CD14-positive monocyte (primary cell): ENCODE measurements at regions of chr11 and their contacts with region 1.

Region 1: DNA sequence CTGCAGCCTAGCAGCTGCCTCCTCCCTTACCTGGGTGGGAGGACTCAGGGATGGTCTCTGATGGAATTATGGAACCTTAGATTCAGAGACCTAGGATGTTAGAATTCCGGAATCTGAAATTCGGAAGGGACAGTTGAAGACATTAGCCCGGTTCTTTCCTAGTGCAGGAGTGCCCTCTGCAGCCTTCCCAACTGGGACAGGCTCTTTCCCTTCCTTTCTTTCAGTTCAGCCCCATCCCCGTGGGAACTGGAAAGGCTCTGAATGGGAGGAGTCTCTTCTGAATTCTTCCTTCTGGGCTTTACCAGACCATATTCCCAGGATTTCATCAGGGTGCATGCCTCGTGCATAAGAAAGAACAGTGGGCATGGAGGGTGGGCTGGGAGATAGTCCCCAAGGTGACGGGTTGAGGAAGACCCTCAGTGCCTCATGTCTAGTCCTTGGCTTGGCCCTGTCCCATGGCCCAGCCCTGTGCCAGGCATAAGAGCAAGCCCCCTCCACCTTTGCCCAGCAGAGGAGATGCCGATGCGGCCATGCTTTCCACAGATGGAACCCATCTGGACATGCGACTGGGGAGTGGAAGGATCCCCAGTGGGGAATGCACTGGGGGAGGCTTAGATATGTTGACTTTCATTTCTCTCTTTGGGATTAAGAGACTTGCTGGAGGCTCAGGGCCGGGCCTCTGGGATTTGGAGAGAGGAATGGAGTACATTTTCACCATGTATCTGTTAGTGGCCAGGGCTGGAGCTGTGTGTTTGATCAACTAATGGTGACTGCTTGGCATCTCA is 14.4 kb downstream of the DNAJB13 start:
- DNase-seq: no peak
- H3K4me3 ChIP-seq: no peak overlapping the region
- H3K4me3 Mint-ChIP-seq: no peak overlapping the region
- H3K27ac ChIP-seq: no peak overlapping the region
- H3K27ac Mint-ChIP-seq: no peak overlapping the region
- H3K4me1 ChIP-seq: peaks cover 3 to 5% of the 10 kb centered on the region in 2 donors
- H3K4me1 Mint-ChIP-seq: peaks cover 6% of the 10 kb centered on the region
- H3K27me3 ChIP-seq: no peaks in the 10 kb centered on the region
- H3K27me3 Mint-ChIP-seq: peaks cover 5 to 16% (median 6%) of the 10 kb centered on the region in 3 donors
- CTCF ChIP-seq: no peak

Region 2: DNA sequence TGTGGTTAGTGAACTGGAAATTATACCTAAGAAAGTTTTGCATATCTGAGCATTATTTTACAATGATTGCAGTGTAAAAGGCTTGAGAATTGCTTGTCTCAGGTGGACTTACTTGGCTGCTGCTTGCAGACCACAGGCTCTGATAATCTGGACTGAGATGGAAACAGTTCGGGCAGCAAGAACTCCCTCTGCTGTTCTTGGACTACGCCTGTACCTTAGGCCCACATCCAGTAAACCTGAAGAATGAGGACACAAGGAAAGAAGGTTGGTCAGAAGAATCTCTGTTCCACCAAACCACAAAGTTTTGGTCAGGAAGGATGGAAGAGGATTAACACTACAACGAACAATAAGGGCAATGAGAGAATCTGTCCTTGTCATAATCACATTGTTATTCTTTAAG is 125.4 kb after region 1 on chr11:
- intact Hi-C with region 1: loop called in 1 of 2 experiments (anchors 5 kb)
- DNase-seq: no peak
- H3K4me3 ChIP-seq: no peak overlapping the region
- H3K4me3 Mint-ChIP-seq: no peak overlapping the region
- H3K27ac ChIP-seq: no peak overlapping the region
- H3K27ac Mint-ChIP-seq: no peak overlapping the region
- H3K4me1 ChIP-seq: peaks cover 0 to 2% of the 10 kb centered on the region in 2 donors
- H3K4me1 Mint-ChIP-seq: peaks cover under 1% of the 10 kb centered on the region
- H3K27me3 ChIP-seq: no peaks in the 10 kb centered on the region
- H3K27me3 Mint-ChIP-seq: no peaks in the 10 kb centered on the region
- CTCF ChIP-seq: no peak

Region 3: DNA sequence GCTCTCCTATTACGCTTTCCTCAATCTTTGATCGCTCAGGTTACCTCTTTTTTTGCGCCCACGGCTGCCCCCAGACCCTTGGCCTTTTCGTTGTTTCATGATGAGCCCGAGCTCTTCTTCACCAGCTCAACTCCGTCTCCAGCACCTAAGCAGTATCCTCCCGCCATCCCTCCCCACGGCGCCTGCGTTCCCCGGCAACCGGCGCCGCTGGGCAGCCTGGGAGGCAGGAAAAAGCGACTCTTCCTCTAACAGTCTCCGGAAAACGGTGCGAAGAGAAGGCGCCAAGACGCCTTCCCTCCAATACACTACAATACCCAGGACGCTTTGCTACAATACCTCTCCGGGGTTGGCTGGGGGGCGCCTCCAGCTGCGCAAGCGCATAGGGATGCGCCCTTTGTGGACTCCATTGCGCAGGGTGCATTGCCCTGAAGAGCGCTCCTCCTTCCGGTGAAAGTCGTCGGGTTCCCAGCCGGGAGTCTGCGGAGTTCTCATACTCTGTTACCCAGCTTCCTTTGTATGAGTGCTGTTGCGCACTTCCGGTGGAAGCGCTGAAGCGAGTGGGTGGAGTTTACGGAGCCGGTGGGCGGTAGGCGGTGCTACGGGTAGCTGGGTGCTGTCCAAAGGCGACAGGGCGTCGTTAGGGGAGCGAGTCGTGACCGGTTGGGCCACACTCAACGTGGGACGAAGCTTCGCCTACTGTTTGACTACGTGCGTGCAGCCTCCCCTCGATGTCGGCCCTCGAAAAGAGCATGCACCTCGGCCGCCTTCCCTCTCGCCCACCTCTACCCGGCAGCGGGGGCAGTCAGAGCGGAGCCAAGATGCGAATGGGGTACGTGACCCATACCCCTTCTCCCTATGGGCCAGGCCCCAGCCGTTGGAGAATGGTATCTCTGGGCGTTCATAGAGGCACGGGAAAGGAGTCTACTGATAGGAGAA is 205.7 kb after region 1 on chr11 and contains the starts of genes C2CD3 and PPME1:
- intact Hi-C with region 1: loop called in 1 of 2 experiments (anchors 10 kb)
- DNase-seq: peak; percentile 99
- H3K4me3 ChIP-seq: peak within 1 kb of the TSS; percentile 75 to 96 (median 81)
- H3K4me3 Mint-ChIP-seq: no peak within 1 kb of the TSS
- H3K27ac ChIP-seq: peak within 1 kb of the TSS; percentile 73 to 90
- H3K27ac Mint-ChIP-seq: no peak within 1 kb of the TSS
- H3K4me1 ChIP-seq: peaks cover 20 to 24% of the 10 kb centered on the region in 2 donors
- H3K4me1 Mint-ChIP-seq: peaks cover 5% of the 10 kb centered on the region
- H3K27me3 ChIP-seq: no peaks in the 10 kb centered on the region
- H3K27me3 Mint-ChIP-seq: no peaks in the 10 kb centered on the region
- CTCF ChIP-seq: peak; percentile 31
- polyA plus RNA-seq, gene C2CD3: 0.87 to 12.1 (median 2.9) TPM
- polyA plus RNA-seq, gene PPME1: 5.2 to 12.2 (median 8.9) TPM